GM12878 (cell line): ENCODE measurements at regions of chr7 and their contacts with region 1.

Region 1: GRCh38 chr7:121126801-121127534 is 138.5 kb downstream of the CPED1 start:
- DNase-seq: no peak
- ATAC-seq: no peak
- H3K4me3 ChIP-seq: no peak overlapping the region
- H3K27ac ChIP-seq: no peak overlapping the region
- H3K4me1 ChIP-seq: no peaks in the 10 kb centered on the region
- H3K27me3 ChIP-seq: no peaks in the 10 kb centered on the region
- CTCF ChIP-seq: peak in 2 of 3 experiments; percentile 5 to 24; a peak in 1 of 6 replicates
- EP300 ChIP-seq: no peak
- POLR2A ChIP-seq: no peak
- RAD21 ChIP-seq: peak; percentile 54

Region 2: GRCh38 chr7:121337398-121337797 is 210.4 kb after region 1 on chr7:
- CTCF ChIA-PET with region 1: interaction called, 5 read pairs
- POLR2A ChIA-PET with region 1: no interaction called
- RAD21 ChIA-PET with region 1: interaction called, 5 read pairs
- SMC1A ChIA-PET with region 1: interaction called, 7 read pairs
- in situ Hi-C with region 1: no loop called
- intact Hi-C with region 1: loop called (anchors 2 kb)
- DNase-seq: no peak
- ATAC-seq: peak; percentile 78
- H3K4me3 ChIP-seq: no peak overlapping the region
- H3K27ac ChIP-seq: no peak overlapping the region
- H3K4me1 ChIP-seq: no peaks in the 10 kb centered on the region
- H3K27me3 ChIP-seq: no peaks in the 10 kb centered on the region
- CTCF ChIP-seq: peak in 2 of 3 experiments; percentile 20 to 50; a peak in 3 of 6 replicates
- EP300 ChIP-seq: no peak
- POLR2A ChIP-seq: no peak
- RAD21 ChIP-seq: peak; percentile 50

Region 3: DNA sequence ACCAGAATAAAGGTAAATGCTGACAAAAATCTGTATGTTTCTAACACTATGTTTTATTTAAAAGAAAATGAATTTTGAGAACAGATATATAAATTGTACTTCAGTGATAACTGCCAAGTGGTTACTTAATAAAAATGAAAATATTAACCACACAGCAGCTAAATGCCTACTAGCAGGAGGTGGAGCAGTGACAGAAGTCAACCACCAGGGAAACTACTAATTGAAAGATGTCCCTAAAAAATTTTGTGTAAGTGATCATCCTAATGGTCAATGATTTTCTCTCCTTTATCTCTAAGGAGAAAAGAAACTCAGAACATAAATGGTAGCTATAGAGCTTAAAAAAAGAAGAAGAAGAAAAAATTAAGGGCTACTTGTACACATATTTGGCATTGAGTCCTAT is 224.7 kb after region 1 on chr7:
- CTCF ChIA-PET with region 1: interaction called, 3 read pairs
- POLR2A ChIA-PET with region 1: no interaction called
- RAD21 ChIA-PET with region 1: no interaction called
- SMC1A ChIA-PET with region 1: interaction called, 3 read pairs
- in situ Hi-C with region 1: no loop called
- intact Hi-C with region 1: loop called (anchors 5 kb)
- DNase-seq: no peak
- ATAC-seq: peak; percentile 52
- H3K4me3 ChIP-seq: no peak overlapping the region
- H3K27ac ChIP-seq: no peak overlapping the region
- H3K4me1 ChIP-seq: no peaks in the 10 kb centered on the region
- H3K27me3 ChIP-seq: no peaks in the 10 kb centered on the region
- CTCF ChIP-seq: no peak
- EP300 ChIP-seq: no peak
- POLR2A ChIP-seq: no peak
- RAD21 ChIP-seq: no peak